ENCODE measurements at regions of chr22 and their contacts with region 1.

Region 1: GRCh38 chr22:41621099-41621910 is at the start of gene XRCC6:
- DNase-seq: peak; percentile 100
- H3K4me3 Mint-ChIP-seq: peak within 1 kb of the TSS; percentile 99
- H3K27ac Mint-ChIP-seq: peak within 1 kb of the TSS; percentile 97
- H3K4me1 Mint-ChIP-seq: peaks cover 46% of the 10 kb centered on the region
- H3K27me3 Mint-ChIP-seq: no peaks in the 10 kb centered on the region
- total RNA-seq, gene XRCC6: 244 to 251 TPM

Region 2: GRCh38 chr22:41448189-41448808 is 173.0 kb before region 1 on chr22:
- CTCF ChIA-PET with region 1: no interaction called
- POLR2A ChIA-PET with region 1: interaction called, 29 read pairs
- DNase-seq: peak; percentile 94
- H3K4me3 Mint-ChIP-seq: peak overlapping the region; percentile 95
- H3K27ac Mint-ChIP-seq: peak overlapping the region; percentile 93
- H3K4me1 Mint-ChIP-seq: peaks cover 22% of the 10 kb centered on the region
- H3K27me3 Mint-ChIP-seq: no peaks in the 10 kb centered on the region

Region 3: GRCh38 chr22:41543854-41544670 is 77.2 kb before region 1 on chr22 and contains the start of gene POLR3H:
- CTCF ChIA-PET with region 1: interaction called, 4 read pairs
- POLR2A ChIA-PET with region 1: interaction called, 12 read pairs
- DNase-seq: peak; percentile 97
- H3K4me3 Mint-ChIP-seq: peak within 1 kb of the TSS; percentile 98
- H3K27ac Mint-ChIP-seq: peak within 1 kb of the TSS; percentile 88
- H3K4me1 Mint-ChIP-seq: peaks cover 45% of the 10 kb centered on the region
- H3K27me3 Mint-ChIP-seq: no peaks in the 10 kb centered on the region
- total RNA-seq, gene POLR3H: 19.2 to 20.5 TPM

Region 4: GRCh38 chr22:41596776-41597634 is 24.3 kb before region 1 on chr22:
- CTCF ChIA-PET with region 1: interaction called, 13 read pairs
- POLR2A ChIA-PET with region 1: interaction called, 158 read pairs
- DNase-seq: peak; percentile 46
- H3K4me3 Mint-ChIP-seq: no peak overlapping the region
- H3K27ac Mint-ChIP-seq: no peak overlapping the region
- H3K4me1 Mint-ChIP-seq: peaks cover 5% of the 10 kb centered on the region
- H3K27me3 Mint-ChIP-seq: no peaks in the 10 kb centered on the region

Region 5: DNA sequence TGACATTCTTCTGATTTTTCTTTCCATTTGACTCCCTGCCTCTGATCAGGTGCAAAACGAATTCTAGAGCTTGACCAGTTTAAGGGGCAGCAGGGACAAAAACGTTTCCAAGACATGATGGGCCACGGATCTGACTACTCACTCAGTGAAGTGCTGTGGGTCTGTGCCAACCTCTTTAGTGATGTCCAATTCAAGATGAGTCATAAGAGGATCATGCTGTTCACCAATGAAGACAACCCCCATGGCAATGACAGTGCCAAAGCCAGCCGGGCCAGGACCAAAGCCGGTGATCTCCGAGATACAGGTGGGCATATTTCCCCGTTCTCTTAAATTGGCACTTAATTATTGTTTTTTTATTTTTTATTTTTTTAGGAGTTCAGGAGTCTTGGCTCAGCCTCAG is 15.2 kb after region 1 on chr22:
- CTCF ChIA-PET with region 1: interaction called, 4 read pairs
- POLR2A ChIA-PET with region 1: interaction called, 22 read pairs
- DNase-seq: no peak
- H3K4me3 Mint-ChIP-seq: no peak overlapping the region
- H3K27ac Mint-ChIP-seq: no peak overlapping the region
- H3K4me1 Mint-ChIP-seq: no peaks in the 10 kb centered on the region
- H3K27me3 Mint-ChIP-seq: no peaks in the 10 kb centered on the region

Region 6: GRCh38 chr22:41688365-41689211 is 67.3 kb after region 1 on chr22 and contains the start of gene SNU13:
- CTCF ChIA-PET with region 1: interaction called, 6 read pairs
- POLR2A ChIA-PET with region 1: interaction called, 28 read pairs
- DNase-seq: peak; percentile 95
- H3K4me3 Mint-ChIP-seq: peak within 1 kb of the TSS; percentile 95
- H3K27ac Mint-ChIP-seq: peak within 1 kb of the TSS; percentile 92
- H3K4me1 Mint-ChIP-seq: peaks cover 40% of the 10 kb centered on the region
- H3K27me3 Mint-ChIP-seq: no peaks in the 10 kb centered on the region
- total RNA-seq, gene SNU13: 166 to 176 TPM

Region 7: GRCh38 chr22:41722496-41722895 is 101.2 kb after region 1 on chr22:
- CTCF ChIA-PET with region 1: no interaction called
- POLR2A ChIA-PET with region 1: no interaction called
- DNase-seq: no peak
- H3K4me3 Mint-ChIP-seq: no peak overlapping the region
- H3K27ac Mint-ChIP-seq: no peak overlapping the region
- H3K4me1 Mint-ChIP-seq: no peaks in the 10 kb centered on the region
- H3K27me3 Mint-ChIP-seq: peaks cover 11% of the 10 kb centered on the region

Region 8: GRCh38 chr22:41780746-41781505 is 159.6 kb after region 1 on chr22:
- CTCF ChIA-PET with region 1: no interaction called
- POLR2A ChIA-PET with region 1: interaction called, 19 read pairs
- DNase-seq: peak; percentile 96
- H3K4me3 Mint-ChIP-seq: peak overlapping the region; percentile 85
- H3K27ac Mint-ChIP-seq: peak overlapping the region; percentile 97
- H3K4me1 Mint-ChIP-seq: peaks cover 46% of the 10 kb centered on the region
- H3K27me3 Mint-ChIP-seq: no peaks in the 10 kb centered on the region

Measured in activated CD4-positive, alpha-beta memory T cell treated with anti-CD3 and anti-CD28 coated beads, Interleukin-2, amount 10 ng/mL, durations not matched to agents 7 days and 5 days (primary cell).